WTC11 (cell line): ENCODE measurements at regions of chr20 and their contacts with region 1.

Region 1: GRCh38 chr20:10047427-10047826 is 12.6 kb downstream of the ANKEF1 start:
- DNase-seq: peak; percentile 62
- ATAC-seq: peak; percentile 98
- H3K4me3 Mint-ChIP-seq: no peak overlapping the region
- H3K27ac Mint-ChIP-seq: no peak overlapping the region
- H3K4me1 Mint-ChIP-seq: no peaks in the 10 kb centered on the region
- H3K27me3 Mint-ChIP-seq: no peaks in the 10 kb centered on the region
- CTCF ChIP-seq: 0 out of 2 replicates have a peak, but pooled peaks have one; percentile 36

Region 2: DNA sequence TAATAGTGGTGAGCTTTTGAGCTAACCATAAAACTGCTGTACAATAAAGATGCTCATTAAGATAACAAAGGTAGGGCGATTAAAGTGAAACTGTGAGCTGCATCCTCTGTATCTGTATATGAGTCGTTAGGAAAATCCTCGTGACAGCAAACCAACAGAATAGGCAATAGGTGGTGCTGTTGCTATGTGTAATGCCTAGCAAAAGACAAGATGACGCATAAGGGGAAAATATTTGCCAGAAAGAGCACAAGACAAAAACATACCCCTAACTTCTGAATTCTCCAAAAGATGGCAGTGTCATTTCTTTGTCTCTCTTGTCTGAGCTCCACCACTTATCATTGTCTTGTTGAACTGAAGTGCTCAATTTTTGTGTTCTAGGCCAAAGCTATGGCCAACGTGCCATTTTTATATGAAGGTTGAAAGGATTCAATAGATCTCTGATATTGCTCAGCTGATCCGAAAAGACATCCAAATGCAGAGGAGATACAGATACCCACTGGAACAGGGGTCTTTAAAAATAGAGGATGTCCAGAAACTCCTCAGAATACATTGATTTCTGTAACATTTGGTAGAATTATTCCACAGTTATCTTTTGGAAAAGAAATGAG is 68.9 kb before region 1 on chr20:
- CTCF ChIA-PET with region 1: interaction called, 30 read pairs
- POLR2A ChIA-PET with region 1: no interaction called
- DNase-seq: no peak
- ATAC-seq: peak; percentile 84
- H3K4me3 Mint-ChIP-seq: no peak overlapping the region
- H3K27ac Mint-ChIP-seq: no peak overlapping the region
- H3K4me1 Mint-ChIP-seq: peaks cover 4% of the 10 kb centered on the region
- H3K27me3 Mint-ChIP-seq: no peaks in the 10 kb centered on the region
- CTCF ChIP-seq: peak; percentile 36; the same call in 1 of the 2 replicates

Region 3: GRCh38 chr20:10022625-10023024 is 24.8 kb before region 1 on chr20:
- CTCF ChIA-PET with region 1: no interaction called
- POLR2A ChIA-PET with region 1: no interaction called
- DNase-seq: no peak
- ATAC-seq: no peak
- H3K4me3 Mint-ChIP-seq: no peak overlapping the region
- H3K27ac Mint-ChIP-seq: no peak overlapping the region
- H3K4me1 Mint-ChIP-seq: no peaks in the 10 kb centered on the region
- H3K27me3 Mint-ChIP-seq: no peaks in the 10 kb centered on the region
- CTCF ChIP-seq: no peak

Region 4: GRCh38 chr20:10034717-10035571 is 12.5 kb before region 1 on chr20 and contains the start of gene ANKEF1:
- CTCF ChIA-PET with region 1: interaction called, 16 read pairs
- POLR2A ChIA-PET with region 1: no interaction called
- DNase-seq: peak; percentile 81
- ATAC-seq: peak; percentile 97
- H3K4me3 Mint-ChIP-seq: peak within 1 kb of the TSS; percentile 72
- H3K27ac Mint-ChIP-seq: no peak within 1 kb of the TSS
- H3K4me1 Mint-ChIP-seq: peaks cover 6% of the 10 kb centered on the region
- H3K27me3 Mint-ChIP-seq: peaks cover 20% of the 10 kb centered on the region
- CTCF ChIP-seq: no peak
- total RNA-seq, gene ANKEF1: 7.1 to 10.3 TPM (median 10.3 TPM) in 3 replicates

Region 5: DNA sequence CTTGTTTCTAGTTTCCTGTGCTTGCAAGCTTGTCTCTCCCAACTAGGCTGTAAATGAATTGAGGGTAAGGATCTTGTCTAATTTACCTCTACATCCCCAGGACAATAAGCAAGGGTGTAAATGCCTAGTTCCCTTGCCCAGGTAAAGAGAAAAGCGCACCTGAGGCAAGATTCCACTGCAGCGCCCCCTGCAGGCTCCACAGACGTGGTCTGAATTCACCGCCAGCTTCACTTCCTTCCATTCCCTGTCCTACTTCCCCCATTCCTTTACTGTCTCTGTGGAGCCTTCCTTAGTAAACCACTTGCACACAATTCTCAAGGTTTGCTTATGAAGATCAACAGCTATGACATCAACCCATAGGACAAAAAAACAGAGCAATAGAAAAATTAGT is 29.6 kb after region 1 on chr20:
- CTCF ChIA-PET with region 1: interaction called, 13 read pairs
- POLR2A ChIA-PET with region 1: no interaction called
- DNase-seq: peak; percentile 77
- ATAC-seq: peak; percentile 87
- H3K4me3 Mint-ChIP-seq: no peak overlapping the region
- H3K27ac Mint-ChIP-seq: no peak overlapping the region
- H3K4me1 Mint-ChIP-seq: no peaks in the 10 kb centered on the region; the same call in 1 of the 2 replicates
- H3K27me3 Mint-ChIP-seq: no peaks in the 10 kb centered on the region; the same call in 1 of the 2 replicates
- CTCF ChIP-seq: peak; percentile 86

Region 6: GRCh38 chr20:10511509-10512251 is 464.3 kb after region 1 on chr20:
- CTCF ChIA-PET with region 1: no interaction called
- POLR2A ChIA-PET with region 1: no interaction called
- DNase-seq: peak; percentile 39
- ATAC-seq: peak; percentile 69
- H3K4me3 Mint-ChIP-seq: no peak overlapping the region
- H3K27ac Mint-ChIP-seq: peak overlapping the region; percentile 67
- H3K4me1 Mint-ChIP-seq: peaks cover 37% of the 10 kb centered on the region
- H3K27me3 Mint-ChIP-seq: no peaks in the 10 kb centered on the region
- CTCF ChIP-seq: no peak